ENCODE measurements at regions of chr4 and their contacts with region 1.

Region 1: DNA sequence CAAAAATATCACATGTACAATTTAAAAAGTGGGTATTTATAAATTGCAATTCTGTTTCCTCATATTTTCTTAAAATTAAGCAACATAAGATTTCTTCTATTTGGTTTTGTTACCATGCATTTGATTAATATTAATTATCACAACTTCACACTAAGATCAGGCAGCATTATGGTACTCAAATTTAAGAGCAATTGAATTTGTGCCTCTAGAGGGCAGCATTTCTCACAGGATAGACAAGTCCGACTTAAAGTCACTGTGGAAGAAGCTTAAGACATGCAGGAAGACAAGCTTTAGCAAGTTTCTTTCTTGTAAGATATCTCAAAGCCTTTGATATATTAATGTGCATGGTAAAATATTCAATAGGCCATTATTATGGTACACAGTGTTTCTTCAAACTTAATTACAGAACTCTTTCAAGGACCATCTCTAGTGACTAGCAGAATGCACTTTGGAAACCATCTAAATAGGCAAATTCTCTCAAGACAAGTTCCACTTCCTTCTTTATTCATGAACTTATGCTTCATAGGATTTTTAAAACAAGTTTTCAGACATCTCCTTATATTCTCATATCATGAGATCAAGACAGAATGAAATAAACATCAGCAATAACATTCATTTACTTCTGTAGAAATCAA is 35.0 kb downstream of the FBXW7 start:
- DNase-seq: peak; percentile 84
- H3K4me3 ChIP-seq: no peak overlapping the region
- H3K27ac ChIP-seq: no peak overlapping the region
- H3K4me1 ChIP-seq: peaks cover 6% of the 10 kb centered on the region
- H3K27me3 ChIP-seq: no peaks in the 10 kb centered on the region
- CTCF ChIP-seq: peak; percentile 54 to 57
- POLR2A ChIP-seq: no peak

Region 2: GRCh38 chr4:152090543-152090942 is 410.4 kb before region 1 on chr4:
- CTCF ChIA-PET with region 1: no interaction called
- POLR2A ChIA-PET with region 1: no interaction called
- dilution Hi-C with region 1: no loop called
- intact Hi-C with region 1: no loop called
- DNase-seq: no peak
- H3K4me3 ChIP-seq: no peak overlapping the region
- H3K27ac ChIP-seq: no peak overlapping the region
- H3K4me1 ChIP-seq: no peaks in the 10 kb centered on the region
- H3K27me3 ChIP-seq: peaks cover 0 to 2% of the 10 kb centered on the region in 2 experiments
- CTCF ChIP-seq: no peak
- POLR2A ChIP-seq: no peak

Region 3: DNA sequence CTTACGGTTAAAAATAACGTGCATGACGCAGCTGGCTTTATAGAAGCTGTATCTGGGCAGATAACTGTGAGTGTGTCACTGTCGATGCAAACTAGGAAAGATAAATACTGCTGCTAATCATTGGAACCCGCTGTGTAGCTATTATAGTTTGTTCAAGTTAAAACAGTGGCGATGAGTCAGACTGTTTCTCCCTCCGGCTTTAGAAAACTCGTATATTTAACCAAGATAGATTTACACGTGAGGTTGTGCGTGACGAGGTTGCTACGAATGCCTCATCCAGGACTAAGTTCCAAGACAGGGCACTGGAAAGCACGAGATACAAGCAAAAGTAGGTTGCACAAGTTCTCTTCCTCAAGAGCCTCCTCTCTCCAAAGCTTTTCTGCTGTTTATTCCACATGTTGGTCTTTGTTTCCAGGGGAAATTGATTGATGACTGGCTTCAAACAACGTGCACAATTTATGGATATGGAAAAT is 235.7 kb before region 1 on chr4:
- CTCF ChIA-PET with region 1: no interaction called
- POLR2A ChIA-PET with region 1: no interaction called
- dilution Hi-C with region 1: no loop called
- intact Hi-C with region 1: no loop called
- DNase-seq: no peak
- H3K4me3 ChIP-seq: no peak overlapping the region
- H3K27ac ChIP-seq: no peak overlapping the region
- H3K4me1 ChIP-seq: peaks cover 8% of the 10 kb centered on the region
- H3K27me3 ChIP-seq: no peaks in the 10 kb centered on the region
- CTCF ChIP-seq: no peak
- POLR2A ChIP-seq: no peak

Region 4: GRCh38 chr4:152464030-152464823 is 36.7 kb before region 1 on chr4:
- CTCF ChIA-PET with region 1: interaction called, 15 read pairs
- POLR2A ChIA-PET with region 1: no interaction called
- dilution Hi-C with region 1: no loop called
- intact Hi-C with region 1: no loop called
- DNase-seq: peak; percentile 31
- H3K4me3 ChIP-seq: no peak overlapping the region
- H3K27ac ChIP-seq: no peak overlapping the region
- H3K4me1 ChIP-seq: peaks cover 11% of the 10 kb centered on the region
- H3K27me3 ChIP-seq: no peaks in the 10 kb centered on the region
- CTCF ChIP-seq: no peak
- POLR2A ChIP-seq: no peak

Region 5: DNA sequence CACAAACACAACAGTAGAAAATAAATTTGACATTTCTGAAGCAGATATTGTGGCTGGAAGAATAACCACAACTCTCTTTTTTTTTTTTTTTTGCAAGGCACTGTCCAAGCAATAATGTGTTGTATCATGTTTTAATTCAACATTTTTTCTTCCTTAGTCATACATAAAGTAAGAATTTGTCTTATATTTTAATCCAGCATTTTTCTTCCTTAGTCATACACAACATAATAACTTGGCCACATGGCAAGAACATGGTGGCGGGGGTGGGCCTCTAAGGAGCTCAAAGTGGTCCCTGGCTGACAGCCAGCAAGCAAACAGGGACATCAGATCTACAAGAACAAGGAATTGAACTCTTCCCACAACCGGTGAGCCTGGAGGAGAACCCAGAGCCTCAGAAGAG is 14.8 kb after region 1 on chr4:
- CTCF ChIA-PET with region 1: interaction called, 40 read pairs
- POLR2A ChIA-PET with region 1: interaction called, 4 read pairs
- dilution Hi-C with region 1: no loop called
- intact Hi-C with region 1: no loop called
- DNase-seq: no peak
- H3K4me3 ChIP-seq: no peak overlapping the region
- H3K27ac ChIP-seq: no peak overlapping the region
- H3K4me1 ChIP-seq: peaks cover 22% of the 10 kb centered on the region
- H3K27me3 ChIP-seq: no peaks in the 10 kb centered on the region
- CTCF ChIP-seq: no peak
- POLR2A ChIP-seq: no peak

Region 6: DNA sequence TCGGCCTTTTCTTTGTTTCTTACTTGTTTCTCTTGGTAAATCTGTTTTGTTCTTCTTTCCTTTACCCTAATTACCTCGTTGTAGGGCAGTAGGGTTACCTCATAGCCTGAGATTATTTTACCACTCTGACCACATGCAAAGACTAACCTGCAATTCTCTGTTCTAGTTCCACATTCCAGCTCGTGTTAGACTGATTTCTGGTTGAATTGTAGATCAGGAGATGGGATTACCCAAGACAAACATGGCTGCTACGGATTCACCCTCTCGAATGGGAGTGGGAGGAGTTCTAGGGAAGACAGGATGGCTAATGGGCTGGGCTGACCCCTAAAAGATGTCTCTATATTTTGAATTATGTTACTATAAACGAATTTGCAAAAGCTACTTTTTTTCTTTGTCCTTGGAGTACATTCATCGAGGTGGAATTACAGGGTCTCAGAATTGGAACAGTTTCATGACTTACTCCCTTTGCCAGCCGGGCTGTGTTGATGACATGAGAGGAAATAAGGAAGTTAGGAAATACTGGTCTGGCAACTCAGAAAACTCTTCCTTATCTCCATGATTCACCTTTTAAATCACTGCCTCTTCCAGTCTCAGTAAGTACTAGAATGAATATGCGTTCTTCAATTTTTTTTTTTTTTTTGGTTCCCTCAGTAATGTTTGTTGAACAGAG is 71.6 kb after region 1 on chr4:
- CTCF ChIA-PET with region 1: interaction called, 15 read pairs
- POLR2A ChIA-PET with region 1: no interaction called
- dilution Hi-C with region 1: no loop called
- intact Hi-C with region 1: no loop called
- DNase-seq: peak; percentile 4
- H3K4me3 ChIP-seq: no peak overlapping the region
- H3K27ac ChIP-seq: no peak overlapping the region
- H3K4me1 ChIP-seq: peaks cover 7% of the 10 kb centered on the region
- H3K27me3 ChIP-seq: no peaks in the 10 kb centered on the region
- CTCF ChIP-seq: no peak
- POLR2A ChIP-seq: no peak

Region 7: GRCh38 chr4:152628128-152628527 is 127.2 kb after region 1 on chr4:
- CTCF ChIA-PET with region 1: interaction called, 56 read pairs
- POLR2A ChIA-PET with region 1: no interaction called
- dilution Hi-C with region 1: no loop called
- intact Hi-C with region 1: no loop called
- DNase-seq: no peak
- H3K4me3 ChIP-seq: no peak overlapping the region
- H3K27ac ChIP-seq: no peak overlapping the region
- H3K4me1 ChIP-seq: no peaks in the 10 kb centered on the region
- H3K27me3 ChIP-seq: no peaks in the 10 kb centered on the region
- CTCF ChIP-seq: no peak
- POLR2A ChIP-seq: no peak

Region 8: GRCh38 chr4:152735396-152735859 is 234.5 kb after region 1 on chr4:
- CTCF ChIA-PET with region 1: interaction called, 52 read pairs
- POLR2A ChIA-PET with region 1: no interaction called
- dilution Hi-C with region 1: no loop called
- intact Hi-C with region 1: loop called (anchors 1 kb)
- DNase-seq: peak; percentile 41
- H3K4me3 ChIP-seq: no peak overlapping the region
- H3K27ac ChIP-seq: no peak overlapping the region
- H3K4me1 ChIP-seq: no peaks in the 10 kb centered on the region
- H3K27me3 ChIP-seq: peaks cover 4 to 5% of the 10 kb centered on the region in 2 experiments
- CTCF ChIP-seq: peak; percentile 30 to 36
- POLR2A ChIP-seq: no peak

Measured in endothelial cell of umbilical vein (primary cell).